HEK293 (cell line): ENCODE measurements at regions of chr1 and their contacts with region 1.

Region 1: GRCh38 chr1:9004700-9005394 is 21.4 kb downstream of the SLC2A7 start:
- H3K4me3 ChIP-seq: no peak overlapping the region
- H3K27ac ChIP-seq: no peak overlapping the region
- H3K4me1 ChIP-seq: no peaks in the 10 kb centered on the region
- CTCF ChIP-seq: peak; percentile 66

Region 2: GRCh38 chr1:8911416-8911815 is 93.4 kb before region 1 on chr1:
- CTCF ChIA-PET with region 1: interaction called, 88 read pairs
- POLR2A ChIA-PET with region 1: interaction called, 3 read pairs
- H3K4me3 ChIP-seq: no peak overlapping the region
- H3K27ac ChIP-seq: no peak overlapping the region
- H3K4me1 ChIP-seq: peaks cover 6% of the 10 kb centered on the region
- CTCF ChIP-seq: no peak

Region 3: DNA sequence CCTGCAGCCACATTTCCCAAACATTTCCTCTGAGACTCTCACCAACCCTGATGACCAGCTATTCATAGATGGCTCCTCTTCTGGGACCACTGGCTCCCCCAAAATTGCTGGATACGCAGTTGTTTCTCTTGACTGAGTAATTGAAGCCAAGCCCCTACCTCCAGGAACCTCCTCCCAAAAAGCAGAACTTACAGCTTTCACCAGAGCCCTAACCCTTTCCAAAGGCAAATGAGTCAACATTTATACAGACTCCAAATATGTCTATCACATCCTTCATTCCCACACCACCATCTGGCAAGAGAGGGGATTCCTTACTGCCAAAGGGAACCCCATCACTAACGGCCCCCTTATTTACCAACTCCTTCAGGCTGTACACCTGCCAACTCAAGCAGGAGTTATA is 79.4 kb before region 1 on chr1:
- CTCF ChIA-PET with region 1: interaction called, 88 read pairs
- POLR2A ChIA-PET with region 1: no interaction called
- H3K4me3 ChIP-seq: no peak overlapping the region
- H3K27ac ChIP-seq: no peak overlapping the region
- H3K4me1 ChIP-seq: no peaks in the 10 kb centered on the region
- CTCF ChIP-seq: no peak

Region 4: GRCh38 chr1:8962812-8963530 is 41.9 kb before region 1 on chr1:
- CTCF ChIA-PET with region 1: interaction called, 19 read pairs
- POLR2A ChIA-PET with region 1: no interaction called
- H3K4me3 ChIP-seq: no peak overlapping the region
- H3K27ac ChIP-seq: no peak overlapping the region
- H3K4me1 ChIP-seq: no peaks in the 10 kb centered on the region
- CTCF ChIP-seq: peak; percentile 38; the same call in 1 of the 2 replicates

Region 5: DNA sequence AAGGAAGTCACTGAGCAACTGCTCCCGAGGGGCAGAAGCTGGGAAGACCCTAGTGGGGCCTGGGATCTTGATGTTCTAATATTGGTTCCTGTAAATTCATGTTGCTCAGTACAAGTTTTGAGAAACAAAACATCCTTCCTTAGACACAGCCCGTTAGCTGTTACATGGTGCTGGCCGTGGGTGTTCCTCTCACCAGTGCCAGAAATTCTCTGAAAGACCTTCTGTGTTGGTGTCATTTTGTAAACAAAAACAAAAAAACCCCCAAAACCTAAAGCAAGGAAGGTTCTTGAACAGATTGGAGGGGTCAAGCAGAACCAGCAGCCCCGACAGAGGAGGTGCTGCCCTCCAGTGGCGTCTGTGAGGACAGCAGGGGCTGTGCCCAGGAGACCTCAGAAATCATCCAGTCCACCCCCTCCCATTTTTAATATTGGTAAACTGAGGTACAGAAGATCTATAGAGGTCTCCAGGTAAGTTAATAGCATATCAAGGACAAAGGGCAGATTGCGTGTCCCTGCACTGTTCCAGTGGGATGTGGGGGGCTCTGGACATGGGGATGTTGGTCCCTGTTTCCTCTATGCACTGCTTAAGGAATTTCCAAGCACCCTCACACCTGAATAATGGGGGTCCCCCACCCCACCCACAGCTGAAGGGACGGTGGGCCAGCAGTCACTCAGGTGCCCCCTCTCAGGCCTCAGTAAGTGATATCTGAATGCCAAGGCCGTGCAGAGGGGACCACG is 16.8 kb before region 1 on chr1:
- CTCF ChIA-PET with region 1: interaction called, 57 read pairs
- POLR2A ChIA-PET with region 1: no interaction called
- H3K4me3 ChIP-seq: no peak overlapping the region
- H3K27ac ChIP-seq: no peak overlapping the region
- H3K4me1 ChIP-seq: no peaks in the 10 kb centered on the region
- CTCF ChIP-seq: peak; percentile 30

Region 6: DNA sequence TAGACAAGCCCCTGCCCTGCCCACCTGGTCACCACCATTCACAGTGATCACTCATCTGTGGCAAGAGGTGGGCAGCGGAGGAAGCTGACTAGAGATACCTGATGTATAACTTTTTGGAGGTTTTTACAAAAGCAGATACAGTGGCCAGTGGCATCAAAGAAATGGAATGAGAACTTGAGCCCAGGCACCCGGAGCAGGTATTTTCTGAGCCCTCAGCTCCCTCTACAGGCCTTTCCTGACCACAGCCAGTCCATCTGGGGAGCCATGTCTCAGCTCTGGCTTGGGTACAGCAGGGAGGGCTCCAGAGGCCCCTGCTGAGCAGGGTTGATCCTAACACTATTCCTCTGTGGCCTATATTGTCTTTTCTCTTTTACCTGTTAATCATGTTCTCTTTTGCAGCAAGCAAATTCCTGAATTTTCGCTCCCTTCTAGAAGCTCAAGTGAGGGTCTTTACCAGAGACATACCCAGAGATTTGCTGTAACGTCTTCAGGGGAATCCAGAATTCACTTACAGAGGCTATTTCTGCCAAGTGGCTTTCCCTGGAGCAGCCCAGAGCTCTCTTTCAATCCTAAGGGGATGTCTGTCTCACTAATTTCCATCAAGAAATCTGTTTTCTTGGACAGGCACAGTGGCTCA is 96.8 kb after region 1 on chr1:
- CTCF ChIA-PET with region 1: interaction called, 33 read pairs
- POLR2A ChIA-PET with region 1: interaction called, 3 read pairs
- H3K4me3 ChIP-seq: no peak overlapping the region
- H3K27ac ChIP-seq: no peak overlapping the region
- H3K4me1 ChIP-seq: no peaks in the 10 kb centered on the region
- CTCF ChIP-seq: peak; percentile 46; the same call in 1 of the 2 replicates